ENCODE measurements at regions of chr2 and their contacts with region 1.

Region 1: DNA sequence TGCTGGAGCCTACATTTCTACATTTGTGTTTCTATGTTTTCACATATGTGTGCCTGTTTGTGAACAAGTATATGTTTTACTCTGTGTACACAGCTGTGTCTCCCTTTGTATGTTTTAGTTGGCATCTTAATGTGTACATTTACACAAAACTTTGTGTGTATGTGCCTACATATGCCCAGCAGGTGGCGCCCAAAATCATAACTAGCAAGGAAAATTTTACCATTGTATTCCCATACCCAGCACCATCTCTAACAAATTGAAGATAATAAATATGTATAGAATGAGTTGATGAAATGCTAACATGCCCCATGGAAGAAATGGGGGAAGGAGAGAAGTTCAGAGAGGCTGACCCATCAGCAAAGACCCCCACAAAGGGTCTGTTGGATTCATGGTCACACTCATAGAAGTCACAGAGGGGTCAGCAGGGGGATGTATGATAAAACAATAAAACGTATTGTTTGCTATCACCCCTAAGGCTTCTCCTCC is 48.1 kb downstream of the PKDCC start:
- DNase-seq: peak; percentile 89
- H3K4me3 Mint-ChIP-seq: no peak overlapping the region
- H3K27ac Mint-ChIP-seq: no peak overlapping the region
- H3K4me1 Mint-ChIP-seq: peaks cover 24% of the 10 kb centered on the region
- H3K27me3 Mint-ChIP-seq: no peaks in the 10 kb centered on the region

Region 2: DNA sequence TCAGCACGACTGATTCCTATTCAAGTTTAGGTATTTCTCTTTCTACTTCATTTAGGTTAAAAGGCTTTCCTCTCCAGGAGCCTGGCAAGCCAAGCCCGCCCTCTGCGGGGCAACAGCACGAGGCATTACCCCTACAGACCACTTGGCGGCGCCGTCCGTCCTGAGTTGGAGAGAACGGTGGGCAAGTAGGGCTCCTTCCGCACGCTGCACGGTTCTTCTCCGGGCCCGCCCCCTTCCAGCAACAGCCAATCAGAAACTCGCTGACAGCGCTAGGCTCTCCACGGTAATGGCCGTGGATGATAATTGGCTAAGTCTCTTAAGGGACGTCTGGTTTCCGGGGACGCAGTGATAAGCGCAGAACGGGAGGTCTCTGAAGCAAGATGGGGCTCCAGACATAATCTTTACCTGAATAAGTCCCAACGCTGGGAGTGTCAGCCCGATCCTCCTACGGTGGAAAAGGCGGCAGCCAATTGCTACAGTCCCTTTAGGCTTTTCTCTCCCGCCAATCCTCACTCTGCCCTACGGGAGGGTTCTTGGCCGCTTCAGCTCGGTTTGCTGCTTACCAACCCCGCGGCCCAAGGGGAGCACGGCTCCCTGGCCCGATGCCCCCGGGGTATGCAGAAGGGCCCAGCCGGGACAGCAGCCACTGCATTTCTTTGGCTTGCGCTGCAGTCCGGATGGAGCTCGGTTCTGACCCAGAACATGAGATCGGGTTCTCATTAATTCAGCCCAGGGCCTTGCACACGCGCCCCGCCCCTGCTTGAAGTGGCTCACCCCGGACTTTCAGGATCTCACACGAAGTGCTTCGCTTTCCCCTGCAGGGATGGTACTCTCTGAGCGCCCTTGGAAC is 255.0 kb before region 1 on chr2:
- CTCF ChIA-PET with region 1: interaction called, 14 read pairs
- intact Hi-C with region 1: no loop called
- DNase-seq: peak; percentile 99
- H3K4me3 Mint-ChIP-seq: peak overlapping the region; percentile 92
- H3K27ac Mint-ChIP-seq: peak overlapping the region; percentile 86
- H3K4me1 Mint-ChIP-seq: peaks cover 5% of the 10 kb centered on the region
- H3K27me3 Mint-ChIP-seq: peaks cover 12% of the 10 kb centered on the region

Region 3: DNA sequence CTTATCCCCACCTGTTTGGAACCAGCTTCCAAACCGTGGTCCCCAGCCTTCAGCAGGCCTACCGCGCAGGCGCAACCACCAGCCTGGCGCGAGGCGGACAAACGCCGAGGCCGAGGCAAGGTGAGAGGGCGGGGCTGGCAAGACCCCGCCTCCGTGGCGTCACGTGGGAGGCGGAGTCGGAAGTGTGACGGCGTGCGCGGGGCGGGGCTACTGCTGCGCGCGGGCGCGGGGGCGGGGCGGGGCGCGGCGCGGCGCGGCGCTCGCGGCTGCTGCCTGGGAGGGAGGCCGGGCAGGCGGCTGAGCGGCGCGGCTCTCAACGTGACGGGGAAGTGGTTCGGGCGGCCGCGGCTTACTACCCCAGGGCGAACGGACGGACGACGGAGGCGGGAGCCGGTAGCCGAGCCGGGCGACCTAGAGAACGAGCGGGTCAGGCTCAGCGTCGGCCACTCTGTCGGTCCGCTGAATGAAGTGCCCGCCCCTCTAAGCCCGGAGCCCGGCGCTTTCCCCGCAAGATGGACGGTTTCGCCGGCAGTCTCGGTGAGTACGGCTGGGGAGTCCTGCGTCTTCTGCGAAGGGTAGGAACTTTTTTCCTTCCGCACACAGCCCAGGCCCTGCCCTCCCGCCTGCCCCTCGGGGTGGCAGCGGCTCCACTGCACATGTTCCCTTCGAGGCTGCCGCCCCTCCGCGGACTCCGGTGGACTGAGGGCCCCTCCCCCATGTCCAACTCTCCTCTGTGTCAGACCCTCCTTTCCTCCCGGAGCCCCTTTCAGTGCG is 73.3 kb after region 1 on chr2 and contains the start of gene EML4:
- CTCF ChIA-PET with region 1: interaction called, 10 read pairs
- intact Hi-C with region 1: no loop called
- DNase-seq: peak; percentile 89
- H3K4me3 Mint-ChIP-seq: no peak within 1 kb of the TSS
- H3K27ac Mint-ChIP-seq: peak within 1 kb of the TSS; percentile 70
- H3K4me1 Mint-ChIP-seq: peaks cover 24% of the 10 kb centered on the region
- H3K27me3 Mint-ChIP-seq: no peaks in the 10 kb centered on the region
- total RNA-seq, gene EML4: 65.8 to 65.9 TPM

Region 4: DNA sequence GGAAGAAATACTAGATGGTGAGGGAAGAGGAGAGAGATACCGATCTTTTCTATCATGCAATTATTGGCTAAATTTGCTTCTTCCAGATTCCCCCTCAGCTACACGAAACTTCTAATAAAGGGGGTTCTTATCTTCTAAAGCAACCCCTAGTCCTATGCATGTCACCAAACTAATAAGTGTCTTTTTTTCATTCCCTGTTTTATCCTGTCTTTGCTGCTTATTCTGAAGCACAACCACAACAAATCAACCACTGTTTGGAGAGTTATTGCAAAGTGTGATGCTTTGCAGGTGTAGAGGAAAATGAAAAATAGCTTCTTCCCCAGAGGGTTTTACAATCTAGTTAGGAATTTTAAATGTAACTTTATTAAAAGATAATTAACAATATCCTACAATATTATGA is 134.0 kb after region 1 on chr2:
- CTCF ChIA-PET with region 1: interaction called, 11 read pairs
- intact Hi-C with region 1: no loop called
- DNase-seq: no peak
- H3K4me3 Mint-ChIP-seq: no peak overlapping the region
- H3K27ac Mint-ChIP-seq: no peak overlapping the region
- H3K4me1 Mint-ChIP-seq: peaks cover 58% of the 10 kb centered on the region
- H3K27me3 Mint-ChIP-seq: no peaks in the 10 kb centered on the region

Region 5: GRCh38 chr2:42238644-42239288 is 142.8 kb after region 1 on chr2:
- CTCF ChIA-PET with region 1: interaction called, 53 read pairs
- intact Hi-C with region 1: loop called (anchors 1 kb)
- DNase-seq: peak; percentile 64
- H3K4me3 Mint-ChIP-seq: no peak overlapping the region
- H3K27ac Mint-ChIP-seq: no peak overlapping the region
- H3K4me1 Mint-ChIP-seq: peaks cover 73% of the 10 kb centered on the region
- H3K27me3 Mint-ChIP-seq: no peaks in the 10 kb centered on the region

Region 6: DNA sequence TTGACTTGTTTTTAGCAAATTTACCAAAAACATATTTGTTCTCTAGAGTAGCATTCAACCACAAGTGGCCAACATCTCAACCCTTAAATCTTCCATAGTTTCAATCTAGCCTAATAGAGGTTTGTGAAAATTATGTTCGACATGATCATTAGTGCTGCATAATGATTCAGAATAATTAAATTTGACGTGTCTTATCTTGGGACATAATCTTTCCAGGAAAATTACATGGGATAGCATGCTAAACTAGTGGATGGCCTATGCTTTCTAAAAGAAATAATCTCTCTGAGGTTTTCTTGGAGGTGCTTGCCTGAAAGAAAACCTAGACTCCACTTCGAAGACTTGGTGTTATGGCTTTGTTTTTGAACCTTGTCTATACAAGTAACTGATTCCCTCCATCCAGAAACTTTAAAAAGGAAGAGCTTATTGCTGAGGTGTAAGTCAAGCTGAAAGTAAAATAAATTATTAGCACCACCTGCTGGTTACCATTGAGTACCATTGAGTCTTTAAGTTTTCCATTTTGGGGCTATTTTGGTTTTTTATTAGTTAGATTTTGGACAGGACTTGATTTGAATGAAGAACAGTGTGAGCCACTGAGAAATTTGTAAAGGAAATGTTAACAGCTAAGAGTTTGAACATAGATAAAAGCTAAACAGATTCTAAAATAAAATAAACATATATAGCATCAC is 232.3 kb after region 1 on chr2:
- CTCF ChIA-PET with region 1: interaction called, 35 read pairs
- intact Hi-C with region 1: loop called (anchors 1 kb)
- DNase-seq: no peak
- H3K4me3 Mint-ChIP-seq: no peak overlapping the region
- H3K27ac Mint-ChIP-seq: peak overlapping the region; percentile 50
- H3K4me1 Mint-ChIP-seq: peaks cover 18% of the 10 kb centered on the region
- H3K27me3 Mint-ChIP-seq: no peaks in the 10 kb centered on the region

Region 7: GRCh38 chr2:42663106-42663780 is 567.3 kb after region 1 on chr2:
- CTCF ChIA-PET with region 1: no interaction called
- intact Hi-C with region 1: loop called (anchors 5 kb)
- DNase-seq: peak; percentile 80
- H3K4me3 Mint-ChIP-seq: no peak overlapping the region
- H3K27ac Mint-ChIP-seq: peak overlapping the region; percentile 57
- H3K4me1 Mint-ChIP-seq: peaks cover 17% of the 10 kb centered on the region
- H3K27me3 Mint-ChIP-seq: no peaks in the 10 kb centered on the region